CD8-positive, alpha-beta T cell (primary cell): ENCODE measurements at regions of chr2 and their contacts with region 1.

Region 1: GRCh38 chr2:230219419-230220331 is at the start of gene SP110:
- DNase-seq: peak; percentile 52 to 89 (median 78)
- ATAC-seq: peak; percentile 93
- H3K4me3 ChIP-seq: peak within 1 kb of the TSS; percentile 90 to 96
- H3K4me3 Mint-ChIP-seq: peak within 1 kb of the TSS; percentile 98
- H3K27ac ChIP-seq: peak within 1 kb of the TSS; percentile 82 to 88
- H3K27ac Mint-ChIP-seq: peak within 1 kb of the TSS; percentile 99
- H3K4me1 ChIP-seq: peaks cover 36% of the 10 kb centered on the region
- H3K4me1 Mint-ChIP-seq: peaks cover 60% of the 10 kb centered on the region
- H3K27me3 ChIP-seq: no peaks in the 10 kb centered on the region
- H3K27me3 Mint-ChIP-seq: no peaks in the 10 kb centered on the region
- CTCF ChIP-seq: no peak
- total RNA-seq, gene SP110: 50.6 to 58.1 TPM

Region 2: GRCh38 chr2:229910832-229911412 is 308.8 kb before region 1 on chr2:
- CTCF ChIA-PET with region 1: no interaction called
- POLR2A ChIA-PET with region 1: no interaction called
- intact Hi-C with region 1: loop called in 1 of 2 experiments (anchors 10 kb)
- DNase-seq: peak in 3 of 9 experiments; percentile 14 to 62 (median 50)
- ATAC-seq: peak; percentile 75
- H3K4me3 ChIP-seq: no peak overlapping the region
- H3K4me3 Mint-ChIP-seq: no peak overlapping the region
- H3K27ac ChIP-seq: no peak overlapping the region
- H3K27ac Mint-ChIP-seq: peak overlapping the region; percentile 81
- H3K4me1 ChIP-seq: peaks cover 14% of the 10 kb centered on the region
- H3K4me1 Mint-ChIP-seq: peaks cover 62% of the 10 kb centered on the region
- H3K27me3 ChIP-seq: no peaks in the 10 kb centered on the region
- H3K27me3 Mint-ChIP-seq: no peaks in the 10 kb centered on the region
- CTCF ChIP-seq: peak; percentile 44

Region 3: GRCh38 chr2:230209422-230210051 is 10.1 kb before region 1 on chr2:
- CTCF ChIA-PET with region 1: interaction called, 3 read pairs
- POLR2A ChIA-PET with region 1: interaction called, 11 read pairs
- intact Hi-C with region 1: no loop called
- DNase-seq: no peak
- ATAC-seq: no peak
- H3K4me3 ChIP-seq: no peak overlapping the region
- H3K4me3 Mint-ChIP-seq: no peak overlapping the region
- H3K27ac ChIP-seq: no peak overlapping the region
- H3K27ac Mint-ChIP-seq: no peak overlapping the region
- H3K4me1 ChIP-seq: no peaks in the 10 kb centered on the region
- H3K4me1 Mint-ChIP-seq: peaks cover 21% of the 10 kb centered on the region
- H3K27me3 ChIP-seq: no peaks in the 10 kb centered on the region
- H3K27me3 Mint-ChIP-seq: no peaks in the 10 kb centered on the region
- CTCF ChIP-seq: no peak

Region 4: GRCh38 chr2:230268606-230269243 is 49.0 kb after region 1 on chr2:
- CTCF ChIA-PET with region 1: no interaction called
- POLR2A ChIA-PET with region 1: no interaction called
- intact Hi-C with region 1: loop called in 1 of 2 experiments (anchors 10 kb)
- DNase-seq: no peak
- ATAC-seq: no peak
- H3K4me3 ChIP-seq: no peak overlapping the region
- H3K4me3 Mint-ChIP-seq: no peak overlapping the region
- H3K27ac ChIP-seq: no peak overlapping the region
- H3K27ac Mint-ChIP-seq: no peak overlapping the region
- H3K4me1 ChIP-seq: no peaks in the 10 kb centered on the region
- H3K4me1 Mint-ChIP-seq: peaks cover 14% of the 10 kb centered on the region
- H3K27me3 ChIP-seq: no peaks in the 10 kb centered on the region
- H3K27me3 Mint-ChIP-seq: no peaks in the 10 kb centered on the region
- CTCF ChIP-seq: no peak

Region 5: DNA sequence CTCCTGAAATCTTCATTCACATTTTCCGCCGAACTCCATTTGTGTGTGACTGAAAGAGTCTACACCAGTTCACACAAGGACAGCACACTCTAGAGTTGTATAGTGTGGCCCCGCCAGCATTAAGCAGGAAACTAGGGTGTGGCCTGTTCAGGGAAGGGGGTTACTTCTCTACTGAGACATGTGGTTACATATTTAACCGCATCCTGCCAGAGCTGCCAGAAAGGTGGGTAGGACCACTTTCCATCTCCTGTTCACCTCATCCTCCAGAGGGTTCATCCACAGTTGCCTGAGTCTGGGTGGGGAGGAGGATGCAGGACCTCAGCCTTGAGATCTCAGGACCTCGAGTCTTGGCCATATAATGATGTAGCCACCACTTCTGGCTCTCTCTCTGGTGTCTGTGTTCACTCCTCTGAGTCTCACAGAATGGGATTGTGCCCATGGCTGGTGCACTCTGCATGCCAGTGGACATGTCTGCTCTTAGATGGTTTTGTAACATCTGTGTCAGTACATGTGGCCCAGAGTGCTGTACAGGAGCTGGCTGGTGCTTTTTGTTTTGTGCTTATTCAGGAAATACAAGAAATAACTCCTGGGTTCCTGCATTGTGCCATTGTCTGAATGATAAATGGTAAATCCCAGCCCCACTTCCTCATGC is 99.7 kb after region 1 on chr2:
- CTCF ChIA-PET with region 1: interaction called, 4 read pairs
- POLR2A ChIA-PET with region 1: interaction called, 22 read pairs
- intact Hi-C with region 1: loop called in 1 of 2 experiments (anchors 2 kb)
- DNase-seq: peak; percentile 37 to 92 (median 76)
- ATAC-seq: peak; percentile 96
- H3K4me3 ChIP-seq: peak overlapping the region; percentile 7 to 24
- H3K4me3 Mint-ChIP-seq: peak overlapping the region; percentile 63
- H3K27ac ChIP-seq: peak overlapping the region; percentile 58 to 61
- H3K27ac Mint-ChIP-seq: peak overlapping the region; percentile 89
- H3K4me1 ChIP-seq: peaks cover 52% of the 10 kb centered on the region
- H3K4me1 Mint-ChIP-seq: peaks cover 69% of the 10 kb centered on the region
- H3K27me3 ChIP-seq: no peaks in the 10 kb centered on the region
- H3K27me3 Mint-ChIP-seq: no peaks in the 10 kb centered on the region
- CTCF ChIP-seq: no peak

Region 6: DNA sequence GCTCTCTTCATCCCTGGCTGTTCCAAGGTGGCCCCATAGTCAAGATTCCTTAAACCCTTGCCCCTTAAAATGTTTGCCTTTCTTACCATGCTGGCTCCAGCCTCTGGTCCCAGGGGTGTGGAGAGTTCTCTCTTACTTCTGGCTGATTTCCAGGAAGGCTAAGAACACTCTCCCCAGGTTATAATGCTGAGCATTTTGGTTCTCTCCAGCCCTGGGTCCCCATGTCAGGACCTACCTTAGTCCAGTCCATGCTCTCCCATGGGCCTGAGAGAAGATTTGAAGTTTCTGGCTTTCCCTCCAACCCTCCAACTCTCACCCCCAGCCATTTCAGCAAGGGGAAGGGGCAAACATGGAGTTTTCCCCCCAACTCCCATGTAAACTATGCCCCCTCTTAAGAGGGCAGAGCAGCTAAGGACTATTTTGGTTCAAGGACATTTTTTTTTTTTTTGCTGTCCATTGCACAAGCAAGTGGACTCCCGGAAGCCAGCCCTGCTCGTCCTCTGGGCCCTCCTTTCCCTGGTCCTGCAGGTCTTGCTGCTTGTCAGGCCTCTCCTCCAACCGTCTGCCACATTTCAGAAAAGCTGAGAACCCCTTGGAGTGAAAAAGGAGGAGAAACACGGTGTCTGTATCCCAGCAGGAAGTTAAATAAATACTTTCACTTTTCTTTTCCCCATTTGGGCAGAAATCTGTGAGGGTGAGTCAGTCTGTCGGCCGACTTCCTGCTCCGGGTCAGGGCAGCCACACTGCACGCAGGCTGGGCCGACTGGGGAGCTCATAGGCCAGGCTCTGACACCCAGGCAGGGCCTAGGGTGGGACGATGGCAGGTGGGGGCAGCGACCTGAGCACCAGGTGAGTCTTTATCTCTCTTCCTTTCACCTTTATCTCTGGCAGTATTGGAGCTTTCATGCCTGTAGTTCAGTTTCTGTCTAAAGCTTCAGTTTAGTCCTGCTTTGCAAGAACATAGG is 107.1 kb after region 1 on chr2 and contains the start of gene SP140L:
- CTCF ChIA-PET with region 1: interaction called, 8 read pairs
- POLR2A ChIA-PET with region 1: interaction called, 22 read pairs
- intact Hi-C with region 1: loop called (anchors 1 to 2 kb)
- DNase-seq: peak; percentile 56 to 91 (median 82)
- ATAC-seq: peak; percentile 100
- H3K4me3 ChIP-seq: peak within 1 kb of the TSS; percentile 63 to 80
- H3K4me3 Mint-ChIP-seq: peak within 1 kb of the TSS; percentile 96
- H3K27ac ChIP-seq: peak within 1 kb of the TSS; percentile 88 to 90
- H3K27ac Mint-ChIP-seq: peak within 1 kb of the TSS; percentile 99
- H3K4me1 ChIP-seq: peaks cover 44% of the 10 kb centered on the region
- H3K4me1 Mint-ChIP-seq: peaks cover 80% of the 10 kb centered on the region
- H3K27me3 ChIP-seq: no peaks in the 10 kb centered on the region
- H3K27me3 Mint-ChIP-seq: no peaks in the 10 kb centered on the region
- CTCF ChIP-seq: no peak
- total RNA-seq, gene SP140L: 69.8 to 70.5 TPM